RWPE1 (cell line): ENCODE measurements at regions of chr1 and their contacts with region 1.

Region 1: GRCh38 chr1:36342481-36343478 is 19.3 kb upstream of the EVA1B start:
- DNase-seq: peak; percentile 61
- H3K27ac ChIP-seq: peak overlapping the region; percentile 69
- CTCF ChIP-seq: peak; percentile 76

Region 2: DNA sequence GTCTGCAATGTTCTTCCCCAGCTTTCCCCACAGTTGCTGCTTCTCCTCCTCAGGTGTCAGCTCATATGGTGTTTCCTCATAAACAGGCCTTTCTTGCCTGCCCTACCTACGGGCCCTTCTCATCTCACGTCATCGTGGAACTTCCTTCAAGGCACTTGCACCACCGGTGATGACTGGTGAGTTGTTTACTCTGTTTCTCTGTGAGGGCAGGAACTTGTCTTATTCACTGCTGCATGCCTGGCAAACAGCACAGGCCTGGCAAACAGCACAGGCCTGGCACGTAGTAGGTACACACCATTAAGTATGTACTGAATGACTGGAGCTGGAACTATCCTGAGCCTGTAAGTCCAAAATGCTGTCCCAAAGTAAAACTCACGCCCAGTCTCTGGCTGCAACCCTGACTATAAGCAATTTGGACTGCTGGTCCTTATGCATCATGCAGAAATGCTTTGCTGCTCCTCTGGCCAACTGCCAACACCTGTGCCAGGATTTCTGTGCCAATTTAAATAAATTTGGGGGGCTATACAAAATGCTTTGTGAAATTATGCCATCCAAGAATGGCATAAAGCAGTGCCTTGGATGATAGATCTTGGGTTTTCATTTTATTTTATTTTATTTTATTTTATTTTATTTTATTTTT is 17.3 kb after region 1 on chr1:
- CTCF ChIA-PET with region 1: interaction called, 14 read pairs
- POLR2A ChIA-PET with region 1: no interaction called
- DNase-seq: no peak
- H3K27ac ChIP-seq: peak overlapping the region; percentile 27
- CTCF ChIP-seq: no peak

Region 3: GRCh38 chr1:36369061-36369861 is 26.5 kb after region 1 on chr1:
- CTCF ChIA-PET with region 1: interaction called, 17 read pairs
- POLR2A ChIA-PET with region 1: no interaction called
- DNase-seq: peak; percentile 90
- H3K27ac ChIP-seq: peak overlapping the region; percentile 51
- CTCF ChIP-seq: peak; percentile 91

Region 4: GRCh38 chr1:36420836-36421664 is 78.3 kb after region 1 on chr1:
- CTCF ChIA-PET with region 1: interaction called, 17 read pairs
- POLR2A ChIA-PET with region 1: no interaction called
- DNase-seq: peak; percentile 66
- H3K27ac ChIP-seq: peak overlapping the region; percentile 49
- CTCF ChIP-seq: peak; percentile 93